ENCODE measurements at regions of chr3 and their contacts with region 1.

Region 1: DNA sequence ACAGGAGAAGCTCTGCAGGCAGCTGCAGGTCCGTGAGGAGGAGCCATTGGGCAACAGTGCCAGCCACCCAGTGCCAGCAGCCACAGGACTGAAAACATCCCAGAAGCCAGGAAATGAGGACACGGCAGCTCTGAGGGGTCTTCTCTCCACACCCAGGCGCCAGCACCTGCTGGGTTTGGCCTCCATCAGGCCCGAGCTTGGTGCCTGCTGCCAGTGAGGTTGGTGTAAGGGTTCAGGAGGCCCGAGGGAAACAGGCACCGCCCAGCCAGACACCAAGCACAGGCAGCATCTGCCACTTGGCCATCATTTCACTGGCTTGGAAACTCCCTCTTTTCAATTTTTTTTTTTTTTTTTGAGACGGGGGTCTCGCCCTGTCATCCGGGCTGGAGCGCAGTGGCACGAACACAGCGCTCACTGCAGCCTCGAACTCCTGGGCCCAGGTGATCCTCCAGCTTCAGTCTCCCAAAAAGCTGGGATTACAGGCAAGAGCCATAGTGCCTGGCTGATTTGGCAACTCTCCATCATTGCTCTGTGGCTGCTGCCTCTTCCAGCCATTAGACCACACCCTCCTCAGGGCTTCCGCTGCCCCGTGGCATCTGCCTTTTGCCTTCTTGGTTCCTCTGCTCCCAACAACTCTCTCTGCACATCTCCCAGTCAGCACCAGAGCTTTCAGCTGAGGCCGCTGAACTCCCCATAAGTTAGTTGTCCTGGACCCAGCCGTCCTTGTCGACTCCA is 1.5 kb upstream of the ITIH3 start:
- DNase-seq: no peak
- ATAC-seq: no peak
- H3K4me3 ChIP-seq: peak overlapping the region in 1 of 3 experiments; percentile 76; a peak in 2 of 6 replicates
- H3K27ac ChIP-seq: peak overlapping the region; percentile 87
- H3K4me1 ChIP-seq: peaks cover 100% of the 10 kb centered on the region
- H3K27me3 ChIP-seq: no peaks in the 10 kb centered on the region
- CTCF ChIP-seq: no peak
- EP300 ChIP-seq: no peak
- POLR2A ChIP-seq: no peak
- RAD21 ChIP-seq: no peak

Region 2: DNA sequence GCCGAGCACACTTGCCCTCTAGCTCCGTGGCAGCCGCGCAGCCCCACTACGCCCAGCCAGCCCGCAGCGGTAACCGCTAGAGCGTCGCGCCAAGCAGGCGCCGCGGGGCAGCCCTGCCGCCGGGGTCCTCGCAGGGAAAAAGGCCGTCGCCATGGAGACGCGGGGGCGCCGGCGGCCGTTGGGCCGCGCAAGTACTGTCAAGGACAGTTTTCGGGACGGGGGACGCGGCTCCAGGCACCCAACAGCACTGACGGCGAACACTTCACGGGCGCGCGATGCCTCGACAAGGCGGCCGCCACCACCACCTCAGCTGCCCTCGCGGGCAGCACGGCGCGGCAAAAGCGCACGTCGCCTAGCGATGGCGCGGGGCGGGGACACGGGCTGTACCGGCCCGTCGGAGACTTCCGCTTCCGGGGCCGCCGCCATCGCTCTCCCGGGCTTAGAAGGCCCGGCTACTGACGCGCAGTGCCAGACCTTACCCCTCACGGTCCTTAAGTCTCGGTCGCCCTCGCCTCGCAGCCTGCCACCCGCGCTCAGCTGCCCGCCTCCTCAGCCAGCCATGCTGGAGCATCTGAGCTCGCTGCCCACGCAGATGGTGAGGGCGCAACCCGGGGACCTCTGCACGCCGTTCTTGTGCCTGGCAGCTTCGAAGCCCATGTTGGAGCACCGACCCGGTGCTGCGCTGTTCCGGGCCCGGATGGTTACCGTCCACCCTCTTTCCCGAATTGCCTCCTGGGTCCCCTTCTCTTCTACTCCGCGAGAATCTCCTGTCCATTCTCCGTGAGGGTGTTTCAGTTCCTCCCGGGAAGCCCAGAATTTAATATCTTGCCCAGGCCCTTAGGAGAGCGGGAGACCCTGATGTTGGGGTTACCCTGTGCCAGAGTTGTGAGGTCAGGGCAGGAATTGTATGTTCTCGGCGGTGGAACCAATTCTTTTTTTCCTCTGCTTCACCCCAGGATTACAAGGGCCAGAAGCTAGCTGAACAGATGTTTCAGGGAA is 87.1 kb before region 1 on chr3 and contains the starts of genes GLT8D1 and SPCS1:
- CTCF ChIA-PET with region 1: no interaction called
- POLR2A ChIA-PET with region 1: interaction called, 11 read pairs
- in situ Hi-C with region 1: no loop called
- intact Hi-C with region 1: no loop called
- DNase-seq: peak; percentile 73
- ATAC-seq: peak; percentile 88
- H3K4me3 ChIP-seq: peak within 1 kb of the TSS; percentile 90 to 97 (median 95)
- H3K27ac ChIP-seq: peak within 1 kb of the TSS; percentile 90
- H3K4me1 ChIP-seq: peaks cover 45% of the 10 kb centered on the region
- H3K27me3 ChIP-seq: no peaks in the 10 kb centered on the region; a peak in 1 of 5 replicates
- CTCF ChIP-seq: no peak; the same call in 1 of the 2 replicates
- EP300 ChIP-seq: 0 out of 4 replicates have a peak, but pooled peaks of 1 of the 2 experiments have one; percentile 14
- POLR2A ChIP-seq: peak; percentile 72 to 87
- RAD21 ChIP-seq: peak; percentile 8; the same call in 1 of the 2 replicates
- total RNA-seq, gene GLT8D1: 65.1 and 110 TPM in 2 replicates
- total RNA-seq, gene SPCS1: 100 and 120 TPM in 2 replicates

Region 3: DNA sequence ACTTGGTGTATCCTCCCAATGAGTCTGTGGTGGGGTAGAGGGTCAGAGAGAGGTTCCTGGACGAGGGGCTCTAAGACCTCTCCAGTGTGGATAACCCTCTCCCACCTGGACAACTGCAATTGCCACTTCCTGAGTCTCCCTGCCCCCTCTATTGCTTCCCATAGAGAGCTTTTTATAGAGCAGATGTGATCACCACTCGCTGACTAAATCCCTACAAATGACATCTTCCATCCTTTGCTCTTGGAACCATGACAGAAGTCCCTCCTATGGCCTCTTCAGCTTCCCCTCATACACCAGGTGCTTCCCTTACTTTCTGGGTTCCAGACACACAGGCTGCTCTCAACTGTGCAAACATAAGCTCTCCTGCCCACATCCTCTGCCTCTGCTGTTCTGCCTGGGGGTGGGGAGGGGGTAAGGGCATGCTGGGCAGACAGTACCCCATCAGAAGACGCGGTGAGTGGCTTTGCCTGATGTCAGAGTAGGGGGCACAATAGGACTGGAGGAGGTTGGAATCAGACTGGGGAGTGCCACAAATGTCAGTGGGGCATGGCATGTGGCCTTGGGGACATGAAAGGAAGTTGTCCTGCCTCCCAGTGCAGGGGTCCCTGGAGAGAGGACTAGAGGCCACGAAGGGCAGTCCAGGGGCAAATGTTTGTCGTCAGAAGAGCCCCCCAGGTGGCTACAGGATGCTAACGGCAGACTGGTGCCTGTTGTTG is 16.7 kb after region 1 on chr3:
- CTCF ChIA-PET with region 1: no interaction called
- POLR2A ChIA-PET with region 1: interaction called, 70 read pairs
- in situ Hi-C with region 1: no loop called
- intact Hi-C with region 1: no loop called
- DNase-seq: no peak
- ATAC-seq: no peak
- H3K4me3 ChIP-seq: no peak overlapping the region
- H3K27ac ChIP-seq: no peak overlapping the region
- H3K4me1 ChIP-seq: peaks cover 61% of the 10 kb centered on the region
- H3K27me3 ChIP-seq: no peaks in the 10 kb centered on the region
- CTCF ChIP-seq: no peak
- EP300 ChIP-seq: no peak
- POLR2A ChIP-seq: peak in 1 of 2 experiments; percentile 54; a peak in 2 of 4 replicates
- RAD21 ChIP-seq: no peak

Region 4: GRCh38 chr3:52820736-52821135 is 27.6 kb after region 1 on chr3:
- CTCF ChIA-PET with region 1: no interaction called
- POLR2A ChIA-PET with region 1: interaction called, 15 read pairs
- in situ Hi-C with region 1: no loop called
- intact Hi-C with region 1: no loop called
- DNase-seq: peak; percentile 51
- ATAC-seq: peak; percentile 77
- H3K4me3 ChIP-seq: no peak overlapping the region
- H3K27ac ChIP-seq: no peak overlapping the region
- H3K4me1 ChIP-seq: peaks cover 52% of the 10 kb centered on the region
- H3K27me3 ChIP-seq: no peaks in the 10 kb centered on the region
- CTCF ChIP-seq: peak; percentile 92
- EP300 ChIP-seq: no peak
- POLR2A ChIP-seq: no peak
- RAD21 ChIP-seq: peak; percentile 61

Region 5: GRCh38 chr3:52959773-52960172 is 166.6 kb after region 1 on chr3:
- CTCF ChIA-PET with region 1: no interaction called
- POLR2A ChIA-PET with region 1: no interaction called
- in situ Hi-C with region 1: no loop called
- intact Hi-C with region 1: no loop called
- DNase-seq: no peak
- ATAC-seq: no peak
- H3K4me3 ChIP-seq: no peak overlapping the region
- H3K27ac ChIP-seq: no peak overlapping the region
- H3K4me1 ChIP-seq: no peaks in the 10 kb centered on the region
- H3K27me3 ChIP-seq: no peaks in the 10 kb centered on the region
- CTCF ChIP-seq: no peak
- EP300 ChIP-seq: no peak
- POLR2A ChIP-seq: no peak
- RAD21 ChIP-seq: no peak

Region 6: DNA sequence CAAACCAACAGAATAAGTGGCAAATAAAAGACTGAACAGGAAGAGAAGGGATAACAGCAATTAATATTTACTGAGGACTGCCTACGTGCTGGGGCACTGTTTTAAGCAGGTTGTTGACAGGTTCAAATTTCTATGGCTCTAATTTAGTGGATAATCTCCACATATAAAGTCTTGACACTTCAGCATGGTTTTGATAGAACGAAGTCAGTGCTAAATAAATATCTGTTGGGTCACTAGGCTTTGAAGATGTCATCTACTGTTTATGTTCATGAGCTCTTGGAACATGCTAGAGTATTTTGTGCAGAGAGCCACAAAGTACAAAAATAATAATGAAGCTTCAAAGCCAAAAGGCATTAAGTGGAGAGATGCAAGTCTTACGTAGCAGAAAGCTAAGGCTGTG is 178.8 kb after region 1 on chr3:
- CTCF ChIA-PET with region 1: no interaction called
- POLR2A ChIA-PET with region 1: no interaction called
- in situ Hi-C with region 1: no loop called
- intact Hi-C with region 1: no loop called
- DNase-seq: no peak
- ATAC-seq: no peak
- H3K4me3 ChIP-seq: no peak overlapping the region
- H3K27ac ChIP-seq: no peak overlapping the region
- H3K4me1 ChIP-seq: peaks cover 23% of the 10 kb centered on the region
- H3K27me3 ChIP-seq: no peaks in the 10 kb centered on the region
- CTCF ChIP-seq: no peak
- EP300 ChIP-seq: no peak
- POLR2A ChIP-seq: no peak
- RAD21 ChIP-seq: no peak